PC-9 (cell line): ENCODE measurements at regions of chr15 and their contacts with region 1.

Region 1: DNA sequence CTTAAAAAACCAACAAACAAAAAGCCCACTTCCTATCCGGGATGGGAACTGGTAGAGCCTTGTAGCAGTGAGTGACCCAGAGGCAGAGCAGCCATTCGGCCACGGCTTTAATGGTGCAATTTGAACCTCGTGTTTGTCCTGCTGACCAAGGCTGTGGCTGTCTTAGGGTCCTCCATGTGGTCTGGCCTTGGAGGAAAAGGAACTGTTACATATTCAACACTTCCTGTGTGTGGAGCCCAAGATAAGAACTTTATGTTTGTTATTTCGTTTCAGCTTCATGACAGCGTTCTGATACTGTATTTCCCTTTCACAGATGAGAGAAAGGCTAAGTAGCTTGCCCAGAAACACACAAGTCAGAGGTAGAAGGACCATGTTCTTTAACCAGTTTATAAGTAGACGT is 269.8 kb downstream of the SV2B start:
- DNase-seq: no peak
- H3K4me3 ChIP-seq: no peak overlapping the region
- H3K27ac ChIP-seq: no peak overlapping the region
- H3K4me1 ChIP-seq: no peaks in the 10 kb centered on the region
- H3K27me3 ChIP-seq: no peaks in the 10 kb centered on the region
- CTCF ChIP-seq: no peak

Region 2: GRCh38 chr15:91407237-91407889 is 37.5 kb after region 1 on chr15:
- CTCF ChIA-PET with region 1: no interaction called
- POLR2A ChIA-PET with region 1: no interaction called
- intact Hi-C with region 1: loop called (anchors 2 kb)
- DNase-seq: peak; percentile 40 to 63
- H3K4me3 ChIP-seq: no peak overlapping the region
- H3K27ac ChIP-seq: no peak overlapping the region
- H3K4me1 ChIP-seq: peaks cover 11% of the 10 kb centered on the region
- H3K27me3 ChIP-seq: no peaks in the 10 kb centered on the region
- CTCF ChIP-seq: no peak